Naive thymus-derived CD4-positive, alpha-beta T cell (primary cell): ENCODE measurements at regions of chr7 and their contacts with region 1.

Region 1: DNA sequence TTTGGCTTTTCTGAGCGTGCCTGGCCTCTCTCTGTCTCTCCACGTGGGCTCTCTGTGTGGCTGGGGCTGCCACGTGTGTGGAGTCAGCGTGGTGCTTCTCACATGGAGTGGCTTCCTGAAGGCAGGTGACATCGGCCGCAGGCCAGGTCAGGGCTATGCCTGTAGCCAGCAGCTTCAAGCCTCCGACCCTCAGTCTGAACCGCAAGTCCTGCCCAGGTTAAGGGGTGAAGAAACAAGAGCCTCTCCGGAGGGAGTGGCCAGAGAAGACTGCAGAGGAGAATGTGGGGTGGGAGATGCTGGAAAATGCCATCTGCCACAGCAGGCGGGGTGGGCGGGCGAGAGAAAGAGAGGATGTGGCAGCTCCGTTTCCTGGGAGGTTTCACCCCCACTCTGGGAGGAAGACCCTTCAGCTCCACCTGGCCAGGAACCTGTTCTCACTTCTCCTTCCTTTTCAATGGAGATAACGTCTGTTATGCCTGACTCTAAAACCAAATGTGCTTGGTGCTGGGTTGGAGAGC is 14.3 kb upstream of the VIPR2 start:
- DNase-seq: no peak
- ATAC-seq: no peak
- H3K4me3 ChIP-seq: no peak overlapping the region
- H3K4me3 Mint-ChIP-seq: no peak overlapping the region
- H3K27ac ChIP-seq: no peak overlapping the region
- H3K27ac Mint-ChIP-seq: no peak overlapping the region
- H3K4me1 ChIP-seq: no peaks in the 10 kb centered on the region
- H3K4me1 Mint-ChIP-seq: no peaks in the 10 kb centered on the region
- H3K27me3 ChIP-seq: no peaks in the 10 kb centered on the region
- H3K27me3 Mint-ChIP-seq: peaks cover 0 to 5% (median 4%) of the 10 kb centered on the region in 5 donors

Region 2: DNA sequence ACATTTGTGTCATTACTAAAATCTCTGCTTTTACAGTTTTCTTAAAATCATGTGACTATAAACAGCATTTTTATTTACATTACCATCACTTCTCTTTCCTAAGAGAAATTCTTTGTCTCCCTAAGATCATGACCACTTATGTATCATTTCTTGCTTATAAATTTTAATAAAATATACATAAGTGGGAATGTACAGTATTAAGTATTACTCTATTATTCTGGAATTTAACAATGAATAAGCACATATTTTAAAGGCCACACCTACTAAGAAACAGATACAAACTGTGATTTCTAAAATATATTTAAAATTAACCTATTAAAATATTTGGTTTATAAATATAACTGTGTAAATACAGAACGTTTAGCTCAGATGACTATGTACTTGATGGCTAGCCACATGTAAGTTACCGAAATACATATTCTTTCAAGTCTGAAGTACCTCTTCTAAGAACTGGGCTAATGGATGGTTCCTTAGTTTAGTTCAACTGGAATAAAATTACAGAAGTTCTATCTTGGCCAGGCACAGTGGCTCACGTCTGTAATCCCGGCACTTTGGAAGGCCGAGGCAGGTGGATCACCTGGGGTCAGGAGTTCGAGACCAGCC is 538.0 kb before region 1 on chr7:
- CTCF ChIA-PET with region 1: no interaction called
- POLR2A ChIA-PET with region 1: no interaction called
- intact Hi-C with region 1: no loop called
- DNase-seq: no peak
- ATAC-seq: no peak
- H3K4me3 ChIP-seq: no peak overlapping the region
- H3K4me3 Mint-ChIP-seq: no peak overlapping the region
- H3K27ac ChIP-seq: no peak overlapping the region
- H3K27ac Mint-ChIP-seq: no peak overlapping the region
- H3K4me1 ChIP-seq: no peaks in the 10 kb centered on the region
- H3K4me1 Mint-ChIP-seq: peaks cover 0 to 8% (median 0%) of the 10 kb centered on the region in 7 donors
- H3K27me3 ChIP-seq: no peaks in the 10 kb centered on the region
- H3K27me3 Mint-ChIP-seq: no peaks in the 10 kb centered on the region

Region 3: GRCh38 chr7:159075563-159076238 is 83.2 kb before region 1 on chr7:
- CTCF ChIA-PET with region 1: no interaction called
- POLR2A ChIA-PET with region 1: no interaction called
- intact Hi-C with region 1: no loop called
- DNase-seq: peak in 1 of 9 donors; percentile 8
- ATAC-seq: no peak
- H3K4me3 ChIP-seq: no peak overlapping the region
- H3K4me3 Mint-ChIP-seq: no peak overlapping the region
- H3K27ac ChIP-seq: no peak overlapping the region
- H3K27ac Mint-ChIP-seq: no peak overlapping the region
- H3K4me1 ChIP-seq: no peaks in the 10 kb centered on the region
- H3K4me1 Mint-ChIP-seq: peaks cover 0 to 15% (median 9%) of the 10 kb centered on the region in 7 donors
- H3K27me3 ChIP-seq: no peaks in the 10 kb centered on the region
- H3K27me3 Mint-ChIP-seq: peaks cover 0 to 24% (median 8%) of the 10 kb centered on the region in 5 donors

Region 4: DNA sequence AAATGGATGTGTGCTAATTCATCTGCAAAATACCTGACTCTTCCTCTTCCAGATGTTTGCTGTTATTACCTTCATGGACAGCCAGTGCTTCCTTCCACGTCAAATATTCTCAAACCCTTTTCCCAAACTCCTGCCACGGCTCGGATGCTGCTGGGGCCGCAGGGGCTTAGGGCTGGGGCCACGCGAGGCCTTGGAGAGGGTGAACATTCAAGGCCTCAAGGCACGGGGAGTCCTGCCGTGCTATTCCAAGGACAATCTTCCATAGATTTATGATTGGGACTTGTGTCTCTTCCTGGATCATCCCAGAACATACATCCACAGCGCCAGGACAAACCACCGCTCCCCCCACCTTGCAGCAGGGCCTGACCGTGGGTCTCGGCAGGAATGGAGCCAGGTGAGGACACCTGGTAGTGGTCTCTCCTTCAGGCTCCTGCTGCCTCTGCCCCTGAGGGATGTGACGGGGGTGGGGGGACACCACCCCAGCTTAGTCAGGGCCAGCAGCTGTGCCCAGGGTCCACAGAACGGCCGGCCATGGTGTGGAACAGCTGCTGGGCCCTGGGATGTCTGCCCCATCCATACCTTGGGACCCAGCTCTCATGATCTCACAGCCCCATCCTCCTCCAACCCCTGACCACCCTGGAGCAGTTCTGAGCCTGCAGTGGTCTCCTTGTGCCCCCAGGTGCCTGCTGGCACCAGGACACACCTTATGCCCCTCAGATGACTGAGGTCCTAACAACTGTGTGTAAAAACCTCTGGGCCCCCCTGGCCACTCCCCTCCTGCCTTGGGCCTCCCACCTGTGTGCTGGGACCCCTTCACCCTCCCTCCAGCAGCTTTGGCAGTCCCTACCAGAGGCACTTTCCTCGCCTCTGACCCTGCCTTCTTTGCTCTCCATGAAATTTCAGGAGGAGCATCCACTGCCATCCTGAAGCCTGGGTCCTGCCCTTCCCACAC is 31.0 kb before region 1 on chr7:
- CTCF ChIA-PET with region 1: interaction called, 4 read pairs
- POLR2A ChIA-PET with region 1: no interaction called
- intact Hi-C with region 1: loop called in 1 of 2 experiments (anchors 1 kb)
- DNase-seq: no peak
- ATAC-seq: no peak
- H3K4me3 ChIP-seq: no peak overlapping the region
- H3K4me3 Mint-ChIP-seq: no peak overlapping the region
- H3K27ac ChIP-seq: no peak overlapping the region
- H3K27ac Mint-ChIP-seq: no peak overlapping the region
- H3K4me1 ChIP-seq: no peaks in the 10 kb centered on the region
- H3K4me1 Mint-ChIP-seq: no peaks in the 10 kb centered on the region
- H3K27me3 ChIP-seq: no peaks in the 10 kb centered on the region
- H3K27me3 Mint-ChIP-seq: peaks cover 5 to 20% (median 17%) of the 10 kb centered on the region in 5 donors